ENCODE measurements at regions of chr9 and their contacts with region 1.

Region 1: DNA sequence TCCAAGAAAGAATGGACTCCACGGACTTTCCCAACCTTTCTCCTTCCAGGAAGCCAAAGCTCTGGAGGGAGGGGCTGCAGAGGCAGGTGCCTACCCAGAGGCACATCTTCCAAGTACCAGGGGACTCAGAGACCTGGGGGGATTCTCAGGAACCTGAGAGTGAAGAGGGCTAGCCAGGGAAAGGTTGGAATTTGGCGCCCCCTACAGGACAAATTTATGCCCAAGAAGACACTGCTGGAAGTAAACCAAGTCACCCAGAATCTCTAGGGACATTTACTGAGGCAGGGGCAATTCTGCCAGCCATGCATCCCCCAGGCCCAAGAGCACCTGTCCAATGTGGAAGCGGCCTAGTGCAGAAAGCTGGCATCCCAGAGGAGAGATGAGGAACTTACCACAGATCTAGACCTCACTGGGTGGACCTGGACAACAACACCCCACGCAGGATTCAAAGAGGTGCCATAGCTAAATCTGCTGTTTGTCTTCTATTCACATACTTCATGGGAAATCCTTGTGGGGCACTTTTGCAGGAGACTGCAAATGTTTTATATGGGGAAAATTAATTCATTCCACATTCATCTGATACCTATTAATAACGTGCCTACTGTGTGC is 25.9 kb upstream of the IDNK start:
- DNase-seq: peak; percentile 53
- H3K4me3 ChIP-seq: no peak overlapping the region
- H3K27ac ChIP-seq: no peak overlapping the region
- H3K4me1 ChIP-seq: no peaks in the 10 kb centered on the region
- H3K27me3 ChIP-seq: no peaks in the 10 kb centered on the region
- CTCF ChIP-seq: peak; percentile 61

Region 2: GRCh38 chr9:83199243-83199642 is 397.8 kb before region 1 on chr9:
- intact Hi-C with region 1: loop called (anchors 5 kb)
- DNase-seq: peak; percentile 29
- H3K4me3 ChIP-seq: no peak overlapping the region
- H3K27ac ChIP-seq: no peak overlapping the region
- H3K4me1 ChIP-seq: no peaks in the 10 kb centered on the region
- H3K27me3 ChIP-seq: no peaks in the 10 kb centered on the region
- CTCF ChIP-seq: peak; percentile 40

Region 3: GRCh38 chr9:83544002-83544698 is 52.9 kb before region 1 on chr9:
- intact Hi-C with region 1: no loop called
- DNase-seq: peak; percentile 48
- H3K4me3 ChIP-seq: no peak overlapping the region
- H3K27ac ChIP-seq: no peak overlapping the region
- H3K4me1 ChIP-seq: no peaks in the 10 kb centered on the region
- H3K27me3 ChIP-seq: no peaks in the 10 kb centered on the region
- CTCF ChIP-seq: peak; percentile 62

Region 4: GRCh38 chr9:83744212-83744611 is 147.2 kb after region 1 on chr9:
- intact Hi-C with region 1: no loop called
- DNase-seq: no peak
- H3K4me3 ChIP-seq: no peak overlapping the region
- H3K27ac ChIP-seq: no peak overlapping the region
- H3K4me1 ChIP-seq: no peaks in the 10 kb centered on the region
- H3K27me3 ChIP-seq: no peaks in the 10 kb centered on the region
- CTCF ChIP-seq: no peak

Measured in colonic mucosa (tissue), 4 donors.